CD8-positive, alpha-beta memory T cell (primary cell): ENCODE measurements at regions of chr1 and their contacts with region 1.

Region 1: DNA sequence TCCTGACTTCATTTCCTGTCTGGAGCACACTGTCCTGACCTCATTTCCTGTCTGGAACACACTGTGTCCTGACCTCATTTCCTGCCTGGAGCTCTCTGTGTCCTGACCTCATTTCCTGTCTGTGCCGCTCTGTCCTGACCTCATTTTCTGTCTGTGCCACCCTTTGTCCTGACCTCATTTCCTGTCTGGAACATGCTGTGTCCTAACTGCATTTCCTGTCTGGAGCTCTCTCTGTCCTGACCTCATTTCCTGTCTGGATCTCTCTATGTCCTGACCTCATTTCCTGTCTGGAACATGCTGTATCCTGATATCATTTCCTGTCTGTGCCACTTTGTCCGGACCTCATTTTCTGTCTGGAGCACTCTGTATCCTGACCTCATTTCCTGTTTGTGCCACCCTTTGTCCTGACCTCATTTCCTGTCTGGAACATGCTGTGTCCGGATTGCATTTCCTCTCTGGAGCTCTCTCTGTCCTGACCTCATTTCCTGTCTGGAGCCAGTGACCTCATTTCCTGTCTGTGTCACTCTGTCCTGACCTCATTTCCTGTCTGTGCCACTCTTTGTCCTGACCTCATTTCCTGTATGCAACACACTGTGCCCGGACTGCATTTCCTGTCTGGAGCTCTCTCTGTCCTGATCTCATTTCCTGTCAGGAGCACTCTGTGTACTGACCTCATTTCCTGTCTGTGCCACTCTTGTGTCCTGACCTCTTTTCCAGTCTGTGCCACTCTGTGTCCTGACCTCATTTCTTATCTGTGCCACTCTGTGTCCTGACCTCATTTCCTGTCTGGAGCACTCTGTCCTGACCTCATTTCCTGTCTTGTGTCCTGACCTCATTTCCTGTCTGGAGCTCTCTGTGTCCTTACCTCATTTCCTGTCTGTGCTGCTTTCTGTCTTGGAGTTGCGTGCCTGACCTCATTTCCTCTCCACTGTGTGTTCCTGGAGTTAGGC is 27.6 kb downstream of the SKI start:
- DNase-seq: peak; percentile 62 to 94 (median 91)
- H3K4me3 ChIP-seq: no peak overlapping the region
- H3K4me3 Mint-ChIP-seq: no peak overlapping the region
- H3K27ac ChIP-seq: peak overlapping the region; percentile 89
- H3K27ac Mint-ChIP-seq: no peak overlapping the region
- H3K4me1 ChIP-seq: peaks cover 85% of the 10 kb centered on the region
- H3K4me1 Mint-ChIP-seq: peaks cover 45 to 60% (median 49%) of the 10 kb centered on the region in 3 donors
- H3K27me3 ChIP-seq: no peaks in the 10 kb centered on the region
- H3K27me3 Mint-ChIP-seq: peaks cover 0 to 2% of the 10 kb centered on the region in 2 donors

Region 2: GRCh38 chr1:2227346-2228153 is 28.1 kb before region 1 on chr1:
- CTCF ChIA-PET with region 1: interaction called, 19 read pairs
- POLR2A ChIA-PET with region 1: interaction called, 32 read pairs
- DNase-seq: peak; percentile 86 to 96 (median 95)
- H3K4me3 ChIP-seq: no peak overlapping the region
- H3K4me3 Mint-ChIP-seq: peak overlapping the region in 6 of 7 donors; percentile 61 to 90 (median 74)
- H3K27ac ChIP-seq: peak overlapping the region; percentile 51
- H3K27ac Mint-ChIP-seq: peak overlapping the region in 4 of 8 donors; percentile 60 to 86 (median 74)
- H3K4me1 ChIP-seq: peaks cover 26% of the 10 kb centered on the region
- H3K4me1 Mint-ChIP-seq: peaks cover 27 to 40% (median 36%) of the 10 kb centered on the region in 3 donors
- H3K27me3 ChIP-seq: no peaks in the 10 kb centered on the region
- H3K27me3 Mint-ChIP-seq: peaks cover 0 to 12% of the 10 kb centered on the region in 2 donors

Region 3: GRCh38 chr1:2233997-2234761 is 21.5 kb before region 1 on chr1:
- CTCF ChIA-PET with region 1: interaction called, 19 read pairs
- POLR2A ChIA-PET with region 1: interaction called, 32 read pairs
- DNase-seq: peak; percentile 77 to 94 (median 82)
- H3K4me3 ChIP-seq: peak overlapping the region; percentile 91
- H3K4me3 Mint-ChIP-seq: peak overlapping the region; percentile 84 to 99 (median 94)
- H3K27ac ChIP-seq: peak overlapping the region; percentile 64
- H3K27ac Mint-ChIP-seq: peak overlapping the region; percentile 97 to 100 (median 98)
- H3K4me1 ChIP-seq: peaks cover 92% of the 10 kb centered on the region
- H3K4me1 Mint-ChIP-seq: peaks cover 75 to 86% (median 76%) of the 10 kb centered on the region in 3 donors
- H3K27me3 ChIP-seq: no peaks in the 10 kb centered on the region
- H3K27me3 Mint-ChIP-seq: peaks cover 0 to 11% of the 10 kb centered on the region in 2 donors

Region 4: DNA sequence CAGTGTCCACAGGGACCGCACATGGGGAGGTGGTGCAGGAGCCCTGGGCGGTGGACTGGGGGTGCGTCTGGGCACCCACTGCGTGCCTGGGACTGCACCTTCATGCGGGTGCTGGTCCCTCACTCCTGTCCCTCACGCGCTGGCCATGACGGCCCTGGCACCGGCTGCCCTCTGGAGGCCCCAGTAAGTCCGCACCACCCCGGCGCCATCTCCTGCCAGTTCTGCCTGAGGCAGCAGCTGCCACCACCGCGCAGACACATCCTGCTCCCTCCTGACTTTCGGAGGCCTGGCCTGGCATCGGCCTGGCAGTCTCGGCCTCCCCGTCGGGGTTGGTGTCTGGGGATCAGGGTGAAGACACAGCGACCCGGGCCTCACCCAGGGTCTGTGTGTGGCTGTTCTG is 70.8 kb after region 1 on chr1:
- CTCF ChIA-PET with region 1: no interaction called
- POLR2A ChIA-PET with region 1: no interaction called
- DNase-seq: no peak
- H3K4me3 ChIP-seq: no peak overlapping the region
- H3K4me3 Mint-ChIP-seq: no peak overlapping the region
- H3K27ac ChIP-seq: no peak overlapping the region
- H3K27ac Mint-ChIP-seq: peak overlapping the region in 1 of 8 donors; percentile 29
- H3K4me1 ChIP-seq: no peaks in the 10 kb centered on the region
- H3K4me1 Mint-ChIP-seq: no peaks in the 10 kb centered on the region
- H3K27me3 ChIP-seq: peaks cover 5% of the 10 kb centered on the region
- H3K27me3 Mint-ChIP-seq: peaks cover 5 to 8% of the 10 kb centered on the region in 2 donors

Region 5: GRCh38 chr1:2391041-2391930 is 135.6 kb after region 1 on chr1 and contains the starts of genes MORN1 and RER1:
- CTCF ChIA-PET with region 1: interaction called, 6 read pairs
- POLR2A ChIA-PET with region 1: interaction called, 10 read pairs
- DNase-seq: peak; percentile 98 to 99 (median 99)
- H3K4me3 ChIP-seq: peak within 1 kb of the TSS; percentile 73
- H3K4me3 Mint-ChIP-seq: peak within 1 kb of the TSS; percentile 87 to 98 (median 90)
- H3K27ac ChIP-seq: peak within 1 kb of the TSS; percentile 82
- H3K27ac Mint-ChIP-seq: peak within 1 kb of the TSS; percentile 84 to 98 (median 92)
- H3K4me1 ChIP-seq: peaks cover 34% of the 10 kb centered on the region
- H3K4me1 Mint-ChIP-seq: peaks cover 27 to 49% (median 34%) of the 10 kb centered on the region in 3 donors
- H3K27me3 ChIP-seq: no peaks in the 10 kb centered on the region
- H3K27me3 Mint-ChIP-seq: no peaks in the 10 kb centered on the region
- total RNA-seq, gene MORN1: 9.4 to 10.4 TPM
- total RNA-seq, gene RER1: 214 to 222 TPM